Common myeloid progenitor, CD34-positive (primary cell): ENCODE measurements at regions of chr11 and their contacts with region 1.

Region 1: DNA sequence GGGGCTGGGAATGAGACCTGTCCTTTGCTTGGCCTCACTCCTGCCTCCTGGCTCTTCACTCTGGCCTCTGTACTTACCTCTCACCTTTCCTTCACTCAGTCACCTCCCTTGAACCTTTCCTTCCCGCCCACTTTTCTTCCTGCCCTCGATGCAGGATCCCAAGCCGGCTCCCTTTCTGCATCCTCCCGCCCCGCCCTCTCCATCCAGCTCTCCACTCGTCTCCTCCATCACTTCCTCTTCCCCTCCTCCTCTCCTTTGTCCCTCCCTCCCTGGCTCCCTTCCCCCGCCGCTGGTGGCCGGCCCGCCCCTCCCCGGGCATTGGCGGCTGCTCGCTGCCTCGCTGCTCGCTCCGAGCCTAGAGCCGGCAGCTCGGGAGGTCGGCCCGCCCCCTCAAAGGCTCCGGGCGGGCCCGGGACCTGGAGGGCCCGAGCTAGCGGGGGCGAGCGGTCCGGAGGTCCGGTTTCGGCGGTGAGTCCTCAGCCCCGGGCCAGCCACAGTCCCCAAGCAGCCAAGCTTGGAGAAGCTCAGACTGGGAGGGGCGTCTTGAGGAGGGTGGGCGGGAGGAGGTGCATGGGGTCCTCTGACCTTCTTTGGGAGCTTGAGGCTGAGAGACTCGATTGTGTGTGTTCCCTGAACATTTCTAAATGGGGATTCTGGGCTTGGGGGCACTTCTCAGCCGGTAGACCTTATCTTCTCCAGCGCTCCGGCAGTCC is 13.8 kb downstream of the PHLDB1 start:
- DNase-seq: peak in 2 of 3 donors; percentile 44 to 55
- H3K4me3 ChIP-seq: peak overlapping the region; percentile 22 to 74 (median 43)
- H3K27ac ChIP-seq: no peak overlapping the region
- H3K4me1 ChIP-seq: peaks cover 0 to 26% (median 20%) of the 10 kb centered on the region in 4 experiments
- H3K27me3 ChIP-seq: no peaks in the 10 kb centered on the region

Region 2: GRCh38 chr11:118592616-118593367 is 28.4 kb before region 1 on chr11:
- CTCF ChIA-PET with region 1: interaction called, 35 read pairs
- POLR2A ChIA-PET with region 1: no interaction called
- DNase-seq: no peak
- H3K4me3 ChIP-seq: no peak overlapping the region
- H3K27ac ChIP-seq: no peak overlapping the region
- H3K4me1 ChIP-seq: peaks cover 0 to 9% (median 6%) of the 10 kb centered on the region in 4 experiments
- H3K27me3 ChIP-seq: no peaks in the 10 kb centered on the region

Region 3: GRCh38 chr11:118634431-118635236 is 13.4 kb after region 1 on chr11:
- CTCF ChIA-PET with region 1: interaction called, 55 read pairs
- POLR2A ChIA-PET with region 1: interaction called, 3 read pairs
- DNase-seq: peak in 2 of 3 donors; percentile 22 to 34
- H3K4me3 ChIP-seq: peak overlapping the region in 1 of 7 experiments; percentile 58
- H3K27ac ChIP-seq: no peak overlapping the region
- H3K4me1 ChIP-seq: peaks cover 0 to 6% (median 0%) of the 10 kb centered on the region in 4 experiments
- H3K27me3 ChIP-seq: no peaks in the 10 kb centered on the region

Region 4: DNA sequence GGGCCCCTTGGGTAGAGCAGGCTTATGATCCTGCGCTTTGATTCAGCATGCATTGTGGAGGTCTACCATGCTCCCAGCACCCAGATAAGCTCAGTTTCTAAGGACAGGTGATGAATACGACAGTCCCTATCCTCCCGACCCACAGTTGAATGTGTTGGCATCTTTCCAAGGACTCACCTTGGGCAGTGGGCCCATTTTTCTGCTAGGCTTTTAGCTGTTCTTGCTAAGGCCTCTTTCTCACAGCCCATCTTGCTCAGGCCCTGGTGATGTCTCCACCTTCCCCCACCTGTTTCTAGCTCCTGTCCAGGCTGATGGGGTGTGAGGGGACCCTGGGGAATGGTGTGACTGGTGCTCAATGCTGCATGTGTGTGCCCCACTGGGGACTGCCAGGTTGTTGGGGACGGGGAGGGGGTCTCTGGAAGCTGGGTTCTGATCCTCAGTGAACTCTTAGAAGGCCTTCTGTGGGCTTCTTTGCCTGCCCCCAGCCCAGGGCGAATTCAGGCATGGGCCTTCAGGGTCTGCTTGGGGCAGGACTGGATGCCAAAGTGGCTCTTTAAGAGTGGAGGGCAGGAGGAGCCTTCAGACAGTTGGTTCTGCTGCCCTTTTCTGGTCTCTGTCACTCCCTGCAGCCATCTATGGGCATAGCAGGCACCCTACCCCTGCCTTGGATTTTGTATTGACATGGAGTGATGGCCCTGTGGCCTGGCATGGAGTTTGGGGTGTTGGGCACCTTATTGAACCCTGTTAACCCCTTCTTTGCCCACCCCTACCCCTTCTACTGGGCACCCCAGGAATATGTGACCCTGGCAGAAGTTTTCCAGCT is 19.3 kb after region 1 on chr11:
- CTCF ChIA-PET with region 1: interaction called, 55 read pairs
- POLR2A ChIA-PET with region 1: interaction called, 3 read pairs
- DNase-seq: peak in 2 of 3 donors; percentile 20 to 22
- H3K4me3 ChIP-seq: no peak overlapping the region
- H3K27ac ChIP-seq: no peak overlapping the region
- H3K4me1 ChIP-seq: no peaks in the 10 kb centered on the region
- H3K27me3 ChIP-seq: no peaks in the 10 kb centered on the region